ENCODE measurements at regions of chr13 and their contacts with region 1.

Region 1: GRCh38 chr13:97432917-97433726 is 847 bp upstream of the RAP2A start:
- DNase-seq: peak; percentile 98 to 99
- ATAC-seq: peak; percentile 90 to 94 (median 92)
- H3K4me3 ChIP-seq: peak overlapping the region; percentile 82
- H3K27ac ChIP-seq: peak overlapping the region; percentile 97
- H3K4me1 ChIP-seq: peaks cover 46% of the 10 kb centered on the region
- H3K27me3 ChIP-seq: no peaks in the 10 kb centered on the region
- CTCF ChIP-seq: no peak

Region 2: DNA sequence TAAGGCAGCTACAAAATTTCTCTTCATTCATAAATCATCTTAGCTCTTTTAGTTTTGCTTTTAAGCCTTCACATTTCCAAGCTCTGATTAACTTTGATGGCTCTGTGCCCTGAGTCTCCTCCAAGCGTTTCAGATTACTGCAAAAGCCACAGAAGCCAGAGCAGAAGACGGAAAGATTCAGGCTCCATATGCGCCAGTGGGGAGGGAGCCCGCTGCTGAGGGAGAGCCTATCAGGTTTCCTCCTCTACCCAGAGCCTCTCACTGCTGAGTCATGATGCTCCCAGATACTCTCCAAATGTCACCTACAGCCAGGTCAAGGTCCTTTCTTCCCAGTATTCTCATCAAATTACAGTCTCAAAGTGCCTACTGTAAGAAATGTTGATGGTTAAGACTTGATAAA is 194.4 kb after region 1 on chr13:
- intact Hi-C with region 1: loop called in 1 of 2 experiments (anchors 10 kb)
- DNase-seq: peak; percentile 69 to 79
- ATAC-seq: peak; percentile 95 to 99 (median 98)
- H3K4me3 ChIP-seq: no peak overlapping the region
- H3K27ac ChIP-seq: no peak overlapping the region
- H3K4me1 ChIP-seq: peaks cover 12% of the 10 kb centered on the region
- H3K27me3 ChIP-seq: no peaks in the 10 kb centered on the region
- CTCF ChIP-seq: no peak

Measured in psoas muscle (tissue), 8 donors.